Activated CD4-positive, alpha-beta T cell treated with anti-CD3 and anti-CD28 coated beads for 36 hours (primary cell): ENCODE measurements at regions of chr6 and their contacts with region 1.

Region 1: GRCh38 chr6:35297601-35298481 is at the start of gene DEF6:
- DNase-seq: peak; percentile 95
- ATAC-seq: peak; percentile 82
- H3K4me3 Mint-ChIP-seq: peak within 1 kb of the TSS; percentile 89
- H3K27ac Mint-ChIP-seq: peak within 1 kb of the TSS; percentile 96
- H3K4me1 Mint-ChIP-seq: peaks cover 48% of the 10 kb centered on the region
- H3K27me3 Mint-ChIP-seq: no peaks in the 10 kb centered on the region
- total RNA-seq, gene DEF6: 74.1 to 86.6 TPM

Region 2: DNA sequence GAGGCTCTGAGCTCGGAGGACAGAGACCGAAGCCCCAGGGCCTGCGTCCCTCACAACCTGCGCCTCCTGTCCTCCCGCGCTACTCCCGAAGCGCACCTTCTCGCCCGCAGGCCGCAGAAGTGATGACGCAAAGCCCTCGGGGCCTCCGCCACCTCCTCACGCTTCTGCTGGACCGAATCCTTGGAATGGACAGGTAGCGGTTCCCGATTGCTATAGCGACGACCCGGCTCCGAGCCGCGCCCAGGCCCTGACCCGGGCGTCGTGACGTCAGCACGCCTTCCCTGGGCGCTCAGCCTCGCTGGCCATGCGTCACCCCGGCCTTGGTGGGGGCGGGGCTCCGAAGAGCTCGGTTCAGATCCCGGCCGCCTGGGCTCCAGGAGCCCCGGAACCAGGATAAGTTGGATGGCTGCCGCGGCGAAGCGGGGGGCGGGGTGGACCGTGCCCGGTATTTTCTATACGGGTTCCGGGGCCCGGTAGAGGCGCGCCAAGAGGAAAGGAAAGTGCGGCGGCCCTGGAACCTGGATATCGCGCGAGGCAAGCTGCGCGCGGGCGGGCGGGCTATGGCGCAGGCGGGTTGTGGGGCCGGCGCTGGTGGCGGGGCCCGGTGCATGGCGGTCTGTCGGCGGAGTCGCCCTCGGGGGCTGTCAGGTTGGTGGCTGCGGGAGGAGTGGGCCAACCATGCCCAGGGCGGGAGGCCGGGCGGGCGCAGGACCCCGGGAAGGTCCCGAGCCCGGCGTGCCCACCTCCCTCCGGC is 38.5 kb before region 1 on chr6 and contains the start of gene ZNF76:
- CTCF ChIA-PET with region 1: interaction called, 6 read pairs
- POLR2A ChIA-PET with region 1: interaction called, 5 read pairs
- intact Hi-C with region 1: loop called in 1 of 2 experiments (anchors 1 kb)
- DNase-seq: peak; percentile 95
- ATAC-seq: peak; percentile 89
- H3K4me3 Mint-ChIP-seq: peak within 1 kb of the TSS; percentile 91
- H3K27ac Mint-ChIP-seq: peak within 1 kb of the TSS; percentile 90
- H3K4me1 Mint-ChIP-seq: peaks cover 45% of the 10 kb centered on the region
- H3K27me3 Mint-ChIP-seq: no peaks in the 10 kb centered on the region
- total RNA-seq, gene ZNF76: 35.2 to 40.1 TPM

Region 3: GRCh38 chr6:35311390-35312075 is 13.7 kb after region 1 on chr6:
- CTCF ChIA-PET with region 1: interaction called, 277 read pairs
- POLR2A ChIA-PET with region 1: interaction called, 5 read pairs
- intact Hi-C with region 1: loop called in 1 of 2 experiments (anchors 1 kb)
- DNase-seq: peak; percentile 69
- ATAC-seq: peak; percentile 74
- H3K4me3 Mint-ChIP-seq: peak overlapping the region; percentile 60
- H3K27ac Mint-ChIP-seq: peak overlapping the region; percentile 96
- H3K4me1 Mint-ChIP-seq: peaks cover 89% of the 10 kb centered on the region
- H3K27me3 Mint-ChIP-seq: no peaks in the 10 kb centered on the region

Region 4: DNA sequence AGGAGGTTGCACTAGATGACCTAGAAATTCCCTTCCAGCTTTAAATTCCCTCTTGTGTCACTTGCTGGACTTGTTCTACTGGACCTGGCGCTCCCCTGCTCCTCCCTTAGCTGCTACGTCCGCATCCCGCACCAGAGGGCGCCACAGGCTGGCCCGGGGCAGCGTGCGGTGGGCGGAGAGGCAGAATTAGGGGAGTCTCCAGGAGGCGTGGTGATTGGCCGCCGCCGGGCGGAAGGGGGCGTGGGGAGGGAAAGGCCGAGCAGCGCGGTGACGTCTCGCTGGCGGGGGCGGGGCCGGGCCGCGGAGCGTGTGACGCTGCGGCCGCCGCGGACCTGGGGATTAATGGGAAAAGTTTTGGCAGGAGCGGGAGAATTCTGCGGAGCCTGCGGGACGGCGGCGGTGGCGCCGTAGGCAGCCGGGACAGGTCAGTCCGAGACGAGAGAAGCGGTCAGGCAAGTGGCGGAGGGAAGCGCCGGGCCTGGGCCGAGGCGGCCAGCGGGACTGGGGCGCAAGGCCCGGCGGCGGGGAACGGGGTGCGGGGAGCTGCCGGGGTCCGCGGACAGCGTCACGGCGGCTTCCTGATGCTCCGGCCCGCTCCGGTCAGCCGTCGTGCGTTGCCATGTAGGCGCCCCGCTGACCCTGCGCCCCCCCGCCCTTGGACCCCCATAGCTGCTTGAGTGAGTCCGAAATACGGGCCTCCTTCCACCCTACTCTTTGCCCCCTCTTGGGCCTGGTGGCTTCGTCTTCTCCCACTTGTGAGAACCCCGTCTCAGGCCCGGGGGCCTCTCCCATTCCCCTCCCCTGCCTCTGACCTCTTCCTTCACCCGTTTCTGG is 44.6 kb after region 1 on chr6 and contains the start of gene PPARD:
- CTCF ChIA-PET with region 1: interaction called, 33 read pairs
- POLR2A ChIA-PET with region 1: no interaction called
- intact Hi-C with region 1: loop called (anchors 1 kb)
- DNase-seq: peak; percentile 99
- ATAC-seq: peak; percentile 98
- H3K4me3 Mint-ChIP-seq: peak within 1 kb of the TSS; percentile 87
- H3K27ac Mint-ChIP-seq: peak within 1 kb of the TSS; percentile 94
- H3K4me1 Mint-ChIP-seq: peaks cover 45% of the 10 kb centered on the region
- H3K27me3 Mint-ChIP-seq: no peaks in the 10 kb centered on the region
- total RNA-seq, gene PPARD: 16.5 to 19.2 TPM

Region 5: GRCh38 chr6:35452186-35453090 is 154.6 kb after region 1 on chr6 and contains the start of gene FANCE:
- CTCF ChIA-PET with region 1: interaction called, 19 read pairs
- POLR2A ChIA-PET with region 1: interaction called, 3 read pairs
- intact Hi-C with region 1: loop called (anchors 1 kb)
- DNase-seq: peak; percentile 95
- ATAC-seq: peak; percentile 89
- H3K4me3 Mint-ChIP-seq: peak within 1 kb of the TSS; percentile 82
- H3K27ac Mint-ChIP-seq: peak within 1 kb of the TSS; percentile 47
- H3K4me1 Mint-ChIP-seq: peaks cover 30% of the 10 kb centered on the region
- H3K27me3 Mint-ChIP-seq: no peaks in the 10 kb centered on the region
- total RNA-seq, gene FANCE: 14.3 to 14.8 TPM

Region 6: DNA sequence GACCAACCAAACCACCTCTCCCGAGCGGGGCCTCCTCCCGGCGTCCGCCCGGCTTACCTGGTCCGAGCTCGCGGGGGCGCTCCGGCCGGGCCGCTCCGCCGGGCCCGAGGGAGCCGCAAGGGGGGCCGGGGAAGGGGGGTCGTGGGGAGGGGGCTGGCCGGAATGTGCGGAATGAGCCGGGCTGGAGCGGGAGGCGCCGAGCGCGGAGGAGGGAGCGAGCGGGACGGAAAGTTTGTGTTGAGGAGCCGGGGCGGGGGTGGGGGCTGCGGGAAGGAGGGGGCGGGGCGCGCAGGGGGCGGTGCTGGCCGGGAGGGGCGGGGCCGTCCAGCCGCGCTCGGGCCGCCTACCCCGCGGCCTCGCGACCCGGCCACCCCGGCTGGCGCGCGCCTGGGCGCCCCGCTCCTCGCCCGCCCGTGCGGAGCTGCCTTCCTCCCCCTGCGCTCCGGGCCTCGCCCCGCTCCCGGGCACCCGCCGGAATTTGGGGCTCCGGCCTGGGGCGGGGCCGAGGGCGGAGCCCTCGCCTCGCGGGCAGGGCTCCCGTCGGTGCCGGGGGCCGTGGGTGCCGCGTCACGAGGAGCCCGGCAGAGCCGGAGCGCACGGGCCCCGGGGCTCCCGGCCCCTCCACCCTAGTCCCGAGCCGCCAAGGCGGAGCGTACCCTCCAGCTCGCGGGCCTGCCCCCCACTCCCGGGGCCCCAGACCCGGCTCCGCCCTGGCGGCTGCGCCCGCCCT is 199.2 kb after region 1 on chr6 and contains the start of gene TEAD3:
- CTCF ChIA-PET with region 1: no interaction called
- POLR2A ChIA-PET with region 1: no interaction called
- intact Hi-C with region 1: loop called in 1 of 2 experiments (anchors 1 kb)
- DNase-seq: peak; percentile 70
- ATAC-seq: peak; percentile 65
- H3K4me3 Mint-ChIP-seq: peak within 1 kb of the TSS; percentile 69
- H3K27ac Mint-ChIP-seq: peak within 1 kb of the TSS; percentile 28
- H3K4me1 Mint-ChIP-seq: peaks cover 4% of the 10 kb centered on the region
- H3K27me3 Mint-ChIP-seq: peaks cover 7% of the 10 kb centered on the region
- total RNA-seq, gene TEAD3: 1.4 to 1.5 TPM

Region 7: GRCh38 chr6:36123257-36124139 is 825.7 kb after region 1 on chr6:
- CTCF ChIA-PET with region 1: no interaction called
- POLR2A ChIA-PET with region 1: no interaction called
- intact Hi-C with region 1: loop called in 1 of 2 experiments (anchors 10 kb)
- DNase-seq: peak; percentile 95
- ATAC-seq: peak; percentile 77
- H3K4me3 Mint-ChIP-seq: peak overlapping the region; percentile 27
- H3K27ac Mint-ChIP-seq: peak overlapping the region; percentile 64
- H3K4me1 Mint-ChIP-seq: peaks cover 89% of the 10 kb centered on the region
- H3K27me3 Mint-ChIP-seq: no peaks in the 10 kb centered on the region